CD8-positive, alpha-beta T cell (primary cell): ENCODE measurements at regions of chr22 and their contacts with region 1.

Region 1: GRCh38 chr22:40346178-40347118 is at the start of gene ADSL:
- DNase-seq: peak; percentile 60 to 91 (median 83)
- ATAC-seq: peak; percentile 76
- H3K4me3 ChIP-seq: peak within 1 kb of the TSS; percentile 73 to 90
- H3K4me3 Mint-ChIP-seq: peak within 1 kb of the TSS; percentile 97
- H3K27ac ChIP-seq: peak within 1 kb of the TSS; percentile 74 to 82
- H3K27ac Mint-ChIP-seq: peak within 1 kb of the TSS; percentile 99
- H3K4me1 ChIP-seq: peaks cover 45% of the 10 kb centered on the region
- H3K4me1 Mint-ChIP-seq: peaks cover 60% of the 10 kb centered on the region
- H3K27me3 ChIP-seq: no peaks in the 10 kb centered on the region
- H3K27me3 Mint-ChIP-seq: no peaks in the 10 kb centered on the region
- CTCF ChIP-seq: no peak
- total RNA-seq, gene ADSL: 61.8 to 68.7 TPM

Region 2: GRCh38 chr22:39900306-39901227 is 445.9 kb before region 1 on chr22 and contains the start of gene GRAP2:
- CTCF ChIA-PET with region 1: interaction called, 15 read pairs
- POLR2A ChIA-PET with region 1: interaction called, 3 read pairs
- intact Hi-C with region 1: loop called in 1 of 2 experiments (anchors 2 kb)
- DNase-seq: peak; percentile 49 to 93 (median 74)
- ATAC-seq: peak; percentile 92
- H3K4me3 ChIP-seq: peak within 1 kb of the TSS; percentile 77 to 80
- H3K4me3 Mint-ChIP-seq: peak within 1 kb of the TSS; percentile 97
- H3K27ac ChIP-seq: peak within 1 kb of the TSS; percentile 71 to 80
- H3K27ac Mint-ChIP-seq: peak within 1 kb of the TSS; percentile 91
- H3K4me1 ChIP-seq: peaks cover 42% of the 10 kb centered on the region
- H3K4me1 Mint-ChIP-seq: peaks cover 27% of the 10 kb centered on the region
- H3K27me3 ChIP-seq: no peaks in the 10 kb centered on the region
- H3K27me3 Mint-ChIP-seq: no peaks in the 10 kb centered on the region
- CTCF ChIP-seq: no peak
- total RNA-seq, gene GRAP2: 105 TPM

Region 3: DNA sequence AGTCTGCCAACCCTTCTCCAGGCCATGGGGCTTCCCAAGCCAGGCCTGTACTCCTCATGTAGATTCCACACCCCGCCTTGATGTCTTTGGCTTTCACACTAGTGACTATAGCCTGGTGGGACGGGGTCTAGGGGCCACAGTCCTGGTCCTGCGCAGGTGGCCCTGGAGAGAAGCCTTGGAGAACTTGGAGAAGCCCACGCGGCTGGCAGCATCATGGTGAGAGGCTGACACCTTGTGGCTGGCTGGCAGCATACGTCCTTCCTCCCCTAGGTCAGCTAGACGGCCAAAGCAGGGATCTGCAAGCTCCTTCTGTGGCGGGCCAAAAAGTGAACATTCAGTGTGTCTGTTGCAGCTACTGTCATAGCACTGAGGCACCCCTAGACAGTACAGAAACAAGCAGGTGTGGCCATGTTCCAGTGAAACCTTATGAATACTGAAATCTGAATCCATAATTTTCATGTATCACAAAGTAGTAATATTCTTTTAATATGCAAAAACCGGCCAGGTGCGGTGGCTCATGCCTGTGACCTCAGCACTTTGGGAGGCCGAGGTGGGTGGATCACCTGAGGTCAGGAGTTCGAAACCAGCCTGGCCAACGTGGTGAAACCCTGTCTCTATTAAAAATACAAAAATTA is 309.7 kb before region 1 on chr22:
- CTCF ChIA-PET with region 1: interaction called, 37 read pairs
- POLR2A ChIA-PET with region 1: interaction called, 3 read pairs
- intact Hi-C with region 1: no loop called
- DNase-seq: peak in 8 of 9 experiments; percentile 31 to 71 (median 46)
- ATAC-seq: peak; percentile 67
- H3K4me3 ChIP-seq: no peak overlapping the region
- H3K4me3 Mint-ChIP-seq: no peak overlapping the region
- H3K27ac ChIP-seq: no peak overlapping the region
- H3K27ac Mint-ChIP-seq: no peak overlapping the region
- H3K4me1 ChIP-seq: no peaks in the 10 kb centered on the region
- H3K4me1 Mint-ChIP-seq: peaks cover 10% of the 10 kb centered on the region
- H3K27me3 ChIP-seq: no peaks in the 10 kb centered on the region
- H3K27me3 Mint-ChIP-seq: peaks cover 21% of the 10 kb centered on the region
- CTCF ChIP-seq: peak; percentile 61

Region 4: DNA sequence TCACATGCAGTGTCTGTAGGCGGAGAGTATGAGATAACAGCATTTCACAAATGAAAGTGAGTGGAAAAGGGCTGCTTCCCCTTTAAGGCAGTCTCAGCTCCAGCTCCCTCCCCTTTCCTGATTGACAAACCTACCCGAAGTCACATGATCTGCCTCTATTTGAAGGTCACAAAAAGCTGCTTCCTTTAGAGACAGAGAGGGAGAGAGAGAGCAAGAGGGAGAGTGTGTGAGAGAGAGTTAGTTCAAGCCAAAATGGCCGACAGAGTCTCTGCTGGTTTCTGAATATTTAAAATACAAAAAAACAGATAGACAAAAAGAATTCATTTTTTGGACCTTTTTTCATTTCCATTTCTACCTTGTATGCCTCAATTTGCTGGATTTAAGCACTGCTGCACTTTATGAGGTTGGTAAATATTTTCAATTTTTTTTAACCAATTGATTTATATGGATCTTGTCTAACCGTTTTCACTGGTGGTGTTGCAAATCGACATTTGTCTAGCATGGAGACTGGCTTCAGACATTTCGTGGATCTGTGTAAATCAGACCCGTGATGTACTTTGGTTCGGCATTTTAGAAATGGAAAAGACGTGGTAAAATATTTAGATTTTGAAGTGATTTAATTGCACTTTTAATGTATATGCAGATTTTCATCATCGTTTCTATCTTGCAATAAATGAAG is 168.6 kb before region 1 on chr22 and contains the start of gene TNRC6B:
- CTCF ChIA-PET with region 1: interaction called, 11 read pairs
- POLR2A ChIA-PET with region 1: interaction called, 6 read pairs
- intact Hi-C with region 1: loop called (anchors 1 to 5 kb)
- DNase-seq: peak; percentile 35 to 96 (median 74)
- ATAC-seq: peak; percentile 76
- H3K4me3 ChIP-seq: peak within 1 kb of the TSS; percentile 59 to 71
- H3K4me3 Mint-ChIP-seq: peak within 1 kb of the TSS; percentile 82
- H3K27ac ChIP-seq: peak within 1 kb of the TSS; percentile 60 to 71
- H3K27ac Mint-ChIP-seq: peak within 1 kb of the TSS; percentile 83
- H3K4me1 ChIP-seq: peaks cover 51% of the 10 kb centered on the region
- H3K4me1 Mint-ChIP-seq: peaks cover 60% of the 10 kb centered on the region
- H3K27me3 ChIP-seq: no peaks in the 10 kb centered on the region
- H3K27me3 Mint-ChIP-seq: no peaks in the 10 kb centered on the region
- CTCF ChIP-seq: no peak
- total RNA-seq, gene TNRC6B: 85.3 to 106 TPM

Region 5: GRCh38 chr22:40270748-40271373 is 75.6 kb before region 1 on chr22:
- CTCF ChIA-PET with region 1: interaction called, 14 read pairs
- POLR2A ChIA-PET with region 1: interaction called, 4 read pairs
- intact Hi-C with region 1: loop called (anchors 1 to 5 kb)
- DNase-seq: no peak
- ATAC-seq: no peak
- H3K4me3 ChIP-seq: no peak overlapping the region
- H3K4me3 Mint-ChIP-seq: no peak overlapping the region
- H3K27ac ChIP-seq: no peak overlapping the region
- H3K27ac Mint-ChIP-seq: peak overlapping the region; percentile 22
- H3K4me1 ChIP-seq: peaks cover 7% of the 10 kb centered on the region
- H3K4me1 Mint-ChIP-seq: peaks cover 42% of the 10 kb centered on the region
- H3K27me3 ChIP-seq: no peaks in the 10 kb centered on the region
- H3K27me3 Mint-ChIP-seq: no peaks in the 10 kb centered on the region
- CTCF ChIP-seq: no peak

Region 6: DNA sequence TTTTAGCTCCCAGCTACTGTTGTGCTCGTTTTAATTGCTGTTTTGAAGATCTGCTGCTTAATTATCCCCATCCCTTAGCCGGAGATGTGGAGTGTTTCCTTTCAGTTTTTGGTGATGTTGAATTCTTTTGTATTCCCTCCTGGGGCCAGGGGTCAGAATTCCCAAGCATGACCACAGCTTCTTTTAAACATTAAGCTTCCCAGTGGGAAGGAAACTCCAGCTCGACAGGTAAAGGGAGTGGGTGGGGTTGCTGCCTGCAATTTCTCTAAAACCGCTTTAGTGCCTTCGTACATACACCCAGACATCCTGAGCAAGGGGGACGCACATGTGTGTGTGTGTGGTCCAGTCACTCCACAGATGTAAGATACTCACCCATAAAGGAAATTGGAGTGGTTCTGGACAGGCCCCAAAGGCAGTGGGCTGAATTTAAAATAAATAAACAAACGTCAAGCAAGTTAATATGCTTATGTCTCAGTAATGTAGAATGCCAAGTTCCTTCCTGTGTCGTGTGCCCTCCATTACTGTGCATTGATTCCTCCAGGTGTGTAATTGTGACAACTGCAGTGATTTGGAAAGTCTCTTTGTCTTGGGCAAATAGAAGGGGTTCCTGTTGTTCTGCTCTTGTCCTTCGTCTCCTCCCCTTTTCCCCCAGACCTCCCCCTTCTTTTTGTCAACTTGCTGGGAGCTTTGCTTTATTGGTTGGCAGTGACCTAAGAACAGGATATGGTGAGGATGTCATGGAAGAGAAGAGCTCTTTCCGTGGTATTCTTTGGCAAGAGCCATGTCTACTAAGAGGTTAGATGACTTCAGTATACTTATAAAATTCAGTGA is 19.3 kb before region 1 on chr22:
- CTCF ChIA-PET with region 1: interaction called, 28 read pairs
- POLR2A ChIA-PET with region 1: interaction called, 33 read pairs
- intact Hi-C with region 1: loop called (anchors 1 kb)
- DNase-seq: peak in 2 of 9 experiments; percentile 44 to 62
- ATAC-seq: peak; percentile 7
- H3K4me3 ChIP-seq: peak overlapping the region in 1 of 2 experiments; percentile 3
- H3K4me3 Mint-ChIP-seq: peak overlapping the region; percentile 53
- H3K27ac ChIP-seq: peak overlapping the region; percentile 9 to 54
- H3K27ac Mint-ChIP-seq: peak overlapping the region; percentile 92
- H3K4me1 ChIP-seq: peaks cover 96% of the 10 kb centered on the region
- H3K4me1 Mint-ChIP-seq: peaks cover 99% of the 10 kb centered on the region
- H3K27me3 ChIP-seq: no peaks in the 10 kb centered on the region
- H3K27me3 Mint-ChIP-seq: no peaks in the 10 kb centered on the region
- CTCF ChIP-seq: no peak